ENCODE measurements at regions of chr16 and their contacts with region 1.

Region 1: GRCh38 chr16:87278191-87279095 is 38.7 kb downstream of the C16orf95 start:
- DNase-seq: peak; percentile 75
- H3K4me3 ChIP-seq: no peak overlapping the region
- H3K27ac ChIP-seq: no peak overlapping the region
- H3K4me1 ChIP-seq: peaks cover 0 to 14% (median 7%) of the 10 kb centered on the region in 4 donors
- H3K27me3 ChIP-seq: peaks cover 10% of the 10 kb centered on the region
- CTCF ChIP-seq: peak; percentile 80 to 87 (median 82)
- EP300 ChIP-seq: no peak
- POLR2A ChIP-seq: no peak

Region 2: GRCh38 chr16:86554917-86555703 is 723.3 kb before region 1 on chr16 and contains the start of gene MTHFSD:
- in situ Hi-C with region 1: loop called (anchors 10 to 25 kb)
- intact Hi-C with region 1: loop called (anchors 5 kb)
- DNase-seq: peak; percentile 95
- H3K4me3 ChIP-seq: peak within 1 kb of the TSS; percentile 76 to 96 (median 84)
- H3K27ac ChIP-seq: peak within 1 kb of the TSS; percentile 86 to 95 (median 88)
- H3K4me1 ChIP-seq: peaks cover 4 to 16% (median 12%) of the 10 kb centered on the region in 4 donors
- H3K27me3 ChIP-seq: peaks cover 11% of the 10 kb centered on the region
- CTCF ChIP-seq: peak in 1 of 5 experiments; percentile 6
- EP300 ChIP-seq: no peak
- POLR2A ChIP-seq: peak; percentile 68
- total RNA-seq, gene MTHFSD: 25.4 to 51.1 (median 30.0) TPM

Region 3: GRCh38 chr16:86563489-86564345 is 714.7 kb before region 1 on chr16:
- in situ Hi-C with region 1: loop called (anchors 10 to 25 kb)
- intact Hi-C with region 1: loop called (anchors 5 kb)
- DNase-seq: peak; percentile 91
- H3K4me3 ChIP-seq: peak overlapping the region in 1 of 4 donors; percentile 23
- H3K27ac ChIP-seq: no peak overlapping the region
- H3K4me1 ChIP-seq: peaks cover 0 to 22% (median 10%) of the 10 kb centered on the region in 4 donors
- H3K27me3 ChIP-seq: peaks cover 78% of the 10 kb centered on the region
- CTCF ChIP-seq: peak; percentile 100
- EP300 ChIP-seq: no peak
- POLR2A ChIP-seq: no peak

Region 4: GRCh38 chr16:86874141-86874540 is 404.3 kb before region 1 on chr16:
- in situ Hi-C with region 1: loop called in 1 of 4 experiments (anchors 25 kb)
- intact Hi-C with region 1: no loop called
- DNase-seq: no peak
- H3K4me3 ChIP-seq: no peak overlapping the region
- H3K27ac ChIP-seq: no peak overlapping the region
- H3K4me1 ChIP-seq: no peaks in the 10 kb centered on the region
- H3K27me3 ChIP-seq: peaks cover 19% of the 10 kb centered on the region
- CTCF ChIP-seq: peak in 4 of 5 experiments; percentile 16 to 50 (median 40)
- EP300 ChIP-seq: no peak
- POLR2A ChIP-seq: no peak

Region 5: GRCh38 chr16:87062569-87063442 is 215.6 kb before region 1 on chr16:
- in situ Hi-C with region 1: loop called in 2 of 4 experiments (anchors 25 kb)
- intact Hi-C with region 1: no loop called
- DNase-seq: peak; percentile 55
- H3K4me3 ChIP-seq: no peak overlapping the region
- H3K27ac ChIP-seq: no peak overlapping the region
- H3K4me1 ChIP-seq: no peaks in the 10 kb centered on the region
- H3K27me3 ChIP-seq: peaks cover 60% of the 10 kb centered on the region
- CTCF ChIP-seq: peak; percentile 64 to 75 (median 72)
- EP300 ChIP-seq: no peak
- POLR2A ChIP-seq: no peak

Region 6: DNA sequence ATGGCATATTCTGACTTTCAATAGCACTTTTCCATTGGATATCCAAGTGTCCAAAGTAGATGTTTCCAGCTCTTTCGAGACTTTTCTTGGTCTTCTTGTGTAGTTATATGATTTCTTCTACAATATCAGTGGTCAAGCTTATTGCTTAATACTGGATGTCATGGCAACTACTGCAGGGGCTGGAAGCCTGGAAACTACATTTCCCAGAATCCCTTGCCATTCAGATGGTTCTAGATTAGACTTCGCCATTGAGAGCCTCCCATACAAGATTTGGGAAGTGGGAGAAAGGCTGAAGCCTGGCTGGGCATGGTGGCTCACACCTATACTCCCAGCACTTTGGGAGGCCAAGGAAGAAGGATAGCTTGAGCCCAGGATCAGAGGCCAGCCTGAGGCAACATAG is 114.8 kb before region 1 on chr16:
- in situ Hi-C with region 1: no loop called
- intact Hi-C with region 1: no loop called
- DNase-seq: no peak
- H3K4me3 ChIP-seq: no peak overlapping the region
- H3K27ac ChIP-seq: no peak overlapping the region
- H3K4me1 ChIP-seq: no peaks in the 10 kb centered on the region
- H3K27me3 ChIP-seq: peaks cover 3% of the 10 kb centered on the region
- CTCF ChIP-seq: no peak
- EP300 ChIP-seq: no peak
- POLR2A ChIP-seq: no peak

Region 7: DNA sequence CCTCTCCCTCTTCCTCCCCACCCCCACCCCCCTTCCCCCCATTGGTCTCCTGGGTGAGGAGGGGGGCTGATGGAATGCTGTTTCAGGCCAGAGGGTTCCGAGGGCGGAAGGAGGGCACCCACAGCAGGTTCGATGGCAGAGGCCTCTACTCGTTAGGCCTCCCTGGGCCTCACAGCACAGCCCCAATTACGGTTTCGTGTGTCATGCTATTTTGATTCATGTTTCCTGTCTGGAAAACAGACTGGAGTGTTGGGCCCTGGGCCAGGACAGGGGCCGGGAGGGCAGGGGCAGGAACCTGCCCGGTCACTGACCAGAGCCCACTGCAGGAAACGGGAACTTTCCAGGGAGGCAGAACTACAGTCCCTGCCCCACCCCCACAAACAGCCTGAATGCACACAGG is 99.5 kb before region 1 on chr16:
- in situ Hi-C with region 1: loop called in 1 of 4 experiments (anchors 25 kb)
- intact Hi-C with region 1: no loop called
- DNase-seq: no peak
- H3K4me3 ChIP-seq: no peak overlapping the region
- H3K27ac ChIP-seq: no peak overlapping the region
- H3K4me1 ChIP-seq: no peaks in the 10 kb centered on the region
- H3K27me3 ChIP-seq: peaks cover 13% of the 10 kb centered on the region
- CTCF ChIP-seq: no peak
- EP300 ChIP-seq: no peak
- POLR2A ChIP-seq: no peak

Region 8: GRCh38 chr16:87203060-87203656 is 75.3 kb before region 1 on chr16:
- in situ Hi-C with region 1: loop called in 1 of 4 experiments (anchors 25 kb)
- intact Hi-C with region 1: loop called (anchors 2 kb)
- DNase-seq: peak; percentile 68
- H3K4me3 ChIP-seq: no peak overlapping the region
- H3K27ac ChIP-seq: no peak overlapping the region
- H3K4me1 ChIP-seq: no peaks in the 10 kb centered on the region
- H3K27me3 ChIP-seq: peaks cover 5% of the 10 kb centered on the region
- CTCF ChIP-seq: peak; percentile 68 to 77 (median 73)
- EP300 ChIP-seq: no peak
- POLR2A ChIP-seq: no peak

Region 9: DNA sequence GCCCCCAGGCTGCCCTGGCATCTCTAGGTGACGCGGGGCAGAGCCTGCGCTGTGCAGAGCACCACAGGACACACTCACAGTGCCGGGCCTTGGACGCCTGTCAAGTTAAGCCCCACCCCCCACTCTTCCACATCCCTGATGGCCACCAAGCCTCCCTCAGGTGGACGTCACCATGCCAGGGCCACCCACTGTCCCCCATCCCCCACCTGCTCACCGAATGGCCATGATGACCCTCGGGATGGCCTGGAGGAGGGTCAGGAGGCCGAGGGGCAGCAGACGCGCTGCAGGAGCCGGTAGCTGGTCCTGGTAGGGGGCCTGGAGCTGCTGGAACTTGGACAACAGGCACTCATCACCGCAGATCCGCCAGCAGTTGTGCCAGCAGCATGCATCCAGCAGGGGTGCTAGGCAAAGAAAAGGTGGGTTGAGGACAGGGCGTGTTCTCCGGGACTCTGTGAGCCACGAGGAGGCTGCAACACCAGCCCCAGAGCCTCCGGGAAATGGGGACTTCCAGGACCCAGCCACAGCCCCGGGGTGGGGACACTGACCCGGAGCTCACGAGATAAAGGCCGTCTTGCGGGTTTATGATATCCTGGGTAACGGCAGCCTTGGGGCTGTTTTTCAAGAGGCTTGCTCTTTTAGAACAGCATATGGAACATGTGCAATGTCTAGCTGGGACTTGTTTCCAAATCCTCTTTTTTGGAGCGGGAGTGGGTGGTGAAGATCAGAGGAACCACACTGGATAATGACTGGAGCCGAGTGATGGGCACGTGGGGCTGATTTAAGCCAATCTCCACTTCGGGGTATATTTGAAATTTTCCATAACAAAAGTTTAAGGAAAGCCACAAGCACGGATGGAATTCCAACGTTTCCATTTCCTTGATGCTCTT is 27.3 kb after region 1 on chr16:
- in situ Hi-C with region 1: no loop called
- intact Hi-C with region 1: no loop called
- DNase-seq: no peak
- H3K4me3 ChIP-seq: no peak overlapping the region
- H3K27ac ChIP-seq: no peak overlapping the region
- H3K4me1 ChIP-seq: peaks cover 0 to 6% (median 0%) of the 10 kb centered on the region in 4 donors
- H3K27me3 ChIP-seq: no peaks in the 10 kb centered on the region
- CTCF ChIP-seq: peak in 1 of 5 experiments; percentile 23
- EP300 ChIP-seq: no peak
- POLR2A ChIP-seq: no peak

Measured in transverse colon (tissue), 4 donors.